ENCODE measurements at regions of chr17 and their contacts with region 1.

Region 1: DNA sequence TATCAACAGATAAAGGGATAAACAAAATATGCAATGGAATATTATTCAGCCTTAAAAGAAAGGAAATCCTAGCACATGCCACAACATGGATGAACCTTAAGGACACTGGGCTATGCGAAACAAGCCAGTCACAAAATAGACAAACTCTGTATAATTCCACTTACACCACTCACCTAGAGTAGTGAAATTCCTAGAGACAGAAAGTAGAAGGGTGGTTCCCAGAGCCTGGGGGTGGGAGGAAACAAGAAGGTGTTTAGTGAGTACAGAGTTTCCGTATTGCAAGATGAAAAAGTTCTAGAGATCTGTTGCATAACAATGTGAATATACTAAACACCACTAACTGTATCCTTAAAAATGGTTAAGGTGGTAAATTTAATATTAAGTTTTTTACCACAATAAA is 10.0 kb downstream of the SPOP start:
- DNase-seq: no peak
- ATAC-seq: peak in 1 of 2 donors; percentile 41

Region 2: DNA sequence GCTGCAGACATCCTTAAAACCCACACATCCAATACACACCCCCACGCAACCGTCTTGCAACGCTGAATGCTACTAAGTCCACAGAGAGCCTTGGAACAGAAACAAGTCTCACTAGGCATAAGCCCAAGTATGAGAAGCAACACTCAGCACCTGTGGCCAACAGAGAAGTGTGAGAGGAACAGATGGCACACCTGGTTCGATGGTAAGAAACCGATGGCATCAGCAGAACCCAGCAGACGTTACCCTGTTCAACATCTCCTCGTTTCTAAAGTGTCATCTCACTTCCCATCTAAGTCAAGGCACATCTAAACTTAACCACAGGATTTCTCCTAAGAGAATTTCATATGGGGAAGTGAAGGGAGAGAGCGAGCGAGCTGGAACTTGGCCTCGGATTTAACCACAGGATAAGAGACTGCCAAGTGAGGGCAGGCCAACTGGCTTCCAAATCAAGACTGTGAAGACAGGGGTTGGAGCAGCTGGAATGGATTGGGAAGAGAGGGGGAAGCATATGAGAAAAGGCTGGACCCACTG is 51.2 kb before region 1 on chr17:
- intact Hi-C with region 1: loop called in 1 of 2 experiments (anchors 10 kb)
- DNase-seq: peak; percentile 78
- ATAC-seq: peak; percentile 90 to 94

Region 3: GRCh38 chr17:51000835-51001638 is 1333.2 kb after region 1 on chr17:
- intact Hi-C with region 1: no loop called
- DNase-seq: no peak
- ATAC-seq: peak; percentile 57 to 71

Measured in left cardiac atrium (tissue), 4 donors.